ENCODE measurements at regions of chr7 and their contacts with region 1.

Region 1: GRCh38 chr7:22082886-22083703 is 137.4 kb upstream of the CDCA7L start:
- DNase-seq: peak; percentile 87 to 99 (median 95)

Region 2: DNA sequence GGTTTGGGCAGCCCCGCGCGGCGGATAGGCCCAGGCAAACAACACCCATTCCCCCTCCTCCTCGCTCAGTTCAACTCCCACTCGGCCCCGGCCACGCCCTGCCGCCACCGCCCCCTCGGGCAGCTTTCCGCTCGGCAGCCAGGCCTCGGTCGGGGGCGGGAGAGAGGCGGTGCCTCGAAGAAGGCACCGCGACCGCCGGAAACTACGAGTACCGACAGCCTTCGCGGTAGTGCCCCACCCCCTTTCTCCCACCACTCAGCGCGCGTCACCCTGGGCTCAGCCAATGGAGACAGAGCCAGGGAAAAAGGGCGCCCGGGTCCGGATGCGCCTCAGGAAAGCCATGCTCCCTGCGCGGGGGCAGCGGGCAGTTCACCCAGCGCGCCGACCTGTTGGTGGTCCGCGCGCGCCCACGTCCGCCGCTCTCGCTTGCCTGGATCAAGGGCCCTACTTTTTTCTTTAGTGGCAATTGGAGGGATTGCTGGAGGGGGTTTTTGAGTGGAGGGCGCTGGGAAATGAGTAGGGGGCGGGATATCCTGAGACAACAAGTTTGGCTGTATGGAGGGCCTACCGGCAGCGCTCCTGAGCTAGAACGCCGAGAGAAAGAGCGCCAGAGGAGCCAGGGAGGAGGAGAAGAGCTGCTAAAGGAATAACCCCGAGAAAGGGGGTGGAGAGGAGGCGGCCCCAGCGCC is 655.8 kb before region 1 on chr7:
- intact Hi-C with region 1: loop called (anchors 5 kb)
- DNase-seq: peak; percentile 98 to 100 (median 99)

Region 3: GRCh38 chr7:21767300-21767900 is 315.7 kb before region 1 on chr7:
- intact Hi-C with region 1: loop called (anchors 5 kb)
- DNase-seq: peak in 5 of 10 donors; percentile 7 to 84 (median 27)

Region 4: GRCh38 chr7:21945454-21946227 is 137.5 kb before region 1 on chr7 and contains the start of gene CDCA7L:
- intact Hi-C with region 1: loop called (anchors 5 kb)
- DNase-seq: peak; percentile 44 to 93 (median 58)

Measured in posterior cingulate gyrus (tissue), 11 donors.